B cell (primary cell): ENCODE measurements at regions of chr9 and their contacts with region 1.

Region 1: DNA sequence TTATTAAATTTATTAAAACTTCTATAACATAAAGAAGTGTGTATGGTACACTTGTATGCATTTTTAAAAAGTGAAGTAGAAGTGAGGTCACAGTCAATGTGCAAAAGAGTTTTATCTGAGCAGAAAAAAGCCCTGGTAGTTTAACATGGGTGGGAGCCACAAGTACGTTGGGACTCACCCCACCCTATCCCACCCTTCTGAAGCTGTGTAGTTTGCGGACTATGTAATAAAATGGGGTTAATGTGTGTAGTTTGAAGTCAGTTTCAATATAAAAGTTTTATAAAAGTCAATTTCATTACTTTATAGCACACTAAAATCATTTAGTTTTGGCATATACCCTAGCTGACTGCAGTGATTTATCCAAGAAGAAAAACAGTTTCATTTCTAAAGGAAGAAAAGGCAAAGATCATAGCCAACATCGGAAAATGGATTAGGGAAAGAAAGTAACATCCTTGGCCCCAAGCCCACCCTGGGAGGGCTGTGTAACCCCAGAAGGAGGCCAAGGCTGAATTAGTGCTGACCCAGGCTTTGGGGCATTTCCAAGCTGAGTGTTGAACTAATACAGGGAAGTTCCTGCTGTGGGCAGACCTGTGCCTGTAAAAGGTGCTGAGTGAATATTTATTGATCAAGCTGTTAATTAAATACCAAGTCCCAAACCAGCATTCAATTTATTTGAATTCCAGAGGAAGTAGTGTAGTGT is 398.6 kb upstream of the ADAMTSL1 start:
- DNase-seq: no peak
- ATAC-seq: no peak
- H3K4me3 ChIP-seq: no peak overlapping the region
- H3K4me3 Mint-ChIP-seq: no peak overlapping the region
- H3K27ac ChIP-seq: no peak overlapping the region
- H3K27ac Mint-ChIP-seq: no peak overlapping the region
- H3K4me1 ChIP-seq: no peaks in the 10 kb centered on the region
- H3K4me1 Mint-ChIP-seq: no peaks in the 10 kb centered on the region
- H3K27me3 ChIP-seq: no peaks in the 10 kb centered on the region
- H3K27me3 Mint-ChIP-seq: no peaks in the 10 kb centered on the region
- CTCF ChIP-seq: no peak

Region 2: GRCh38 chr9:17994700-17995430 is 80.5 kb before region 1 on chr9:
- CTCF ChIA-PET with region 1: no interaction called
- POLR2A ChIA-PET with region 1: no interaction called
- intact Hi-C with region 1: no loop called
- DNase-seq: no peak
- ATAC-seq: no peak
- H3K4me3 ChIP-seq: no peak overlapping the region
- H3K4me3 Mint-ChIP-seq: no peak overlapping the region
- H3K27ac ChIP-seq: no peak overlapping the region
- H3K27ac Mint-ChIP-seq: no peak overlapping the region
- H3K4me1 ChIP-seq: no peaks in the 10 kb centered on the region
- H3K4me1 Mint-ChIP-seq: no peaks in the 10 kb centered on the region
- H3K27me3 ChIP-seq: no peaks in the 10 kb centered on the region
- H3K27me3 Mint-ChIP-seq: no peaks in the 10 kb centered on the region
- CTCF ChIP-seq: no peak

Region 3: GRCh38 chr9:18023332-18023731 is 52.1 kb before region 1 on chr9:
- CTCF ChIA-PET with region 1: no interaction called
- POLR2A ChIA-PET with region 1: no interaction called
- intact Hi-C with region 1: loop called (anchors 10 kb)
- DNase-seq: no peak
- ATAC-seq: no peak
- H3K4me3 ChIP-seq: no peak overlapping the region
- H3K4me3 Mint-ChIP-seq: no peak overlapping the region
- H3K27ac ChIP-seq: no peak overlapping the region
- H3K27ac Mint-ChIP-seq: no peak overlapping the region
- H3K4me1 ChIP-seq: no peaks in the 10 kb centered on the region
- H3K4me1 Mint-ChIP-seq: no peaks in the 10 kb centered on the region
- H3K27me3 ChIP-seq: no peaks in the 10 kb centered on the region
- H3K27me3 Mint-ChIP-seq: no peaks in the 10 kb centered on the region
- CTCF ChIP-seq: no peak